IMR-90 (cell line): ENCODE measurements at regions of chr12 and their contacts with region 1.

Region 1: GRCh38 chr12:12872139-12872881 is 19.1 kb upstream of the GPRC5A start:
- DNase-seq: peak; percentile 88
- ATAC-seq: peak; percentile 45
- H3K4me3 ChIP-seq: peak overlapping the region; percentile 2; the same call in 1 of the 2 replicates
- H3K27ac ChIP-seq: peak overlapping the region; percentile 96
- H3K4me1 ChIP-seq: peaks cover 26% of the 10 kb centered on the region
- H3K27me3 ChIP-seq: no peaks in the 10 kb centered on the region
- CTCF ChIP-seq: no peak
- POLR2A ChIP-seq: peak; percentile 48; the same call in 1 of the 2 replicates
- RAD21 ChIP-seq: no peak

Region 2: DNA sequence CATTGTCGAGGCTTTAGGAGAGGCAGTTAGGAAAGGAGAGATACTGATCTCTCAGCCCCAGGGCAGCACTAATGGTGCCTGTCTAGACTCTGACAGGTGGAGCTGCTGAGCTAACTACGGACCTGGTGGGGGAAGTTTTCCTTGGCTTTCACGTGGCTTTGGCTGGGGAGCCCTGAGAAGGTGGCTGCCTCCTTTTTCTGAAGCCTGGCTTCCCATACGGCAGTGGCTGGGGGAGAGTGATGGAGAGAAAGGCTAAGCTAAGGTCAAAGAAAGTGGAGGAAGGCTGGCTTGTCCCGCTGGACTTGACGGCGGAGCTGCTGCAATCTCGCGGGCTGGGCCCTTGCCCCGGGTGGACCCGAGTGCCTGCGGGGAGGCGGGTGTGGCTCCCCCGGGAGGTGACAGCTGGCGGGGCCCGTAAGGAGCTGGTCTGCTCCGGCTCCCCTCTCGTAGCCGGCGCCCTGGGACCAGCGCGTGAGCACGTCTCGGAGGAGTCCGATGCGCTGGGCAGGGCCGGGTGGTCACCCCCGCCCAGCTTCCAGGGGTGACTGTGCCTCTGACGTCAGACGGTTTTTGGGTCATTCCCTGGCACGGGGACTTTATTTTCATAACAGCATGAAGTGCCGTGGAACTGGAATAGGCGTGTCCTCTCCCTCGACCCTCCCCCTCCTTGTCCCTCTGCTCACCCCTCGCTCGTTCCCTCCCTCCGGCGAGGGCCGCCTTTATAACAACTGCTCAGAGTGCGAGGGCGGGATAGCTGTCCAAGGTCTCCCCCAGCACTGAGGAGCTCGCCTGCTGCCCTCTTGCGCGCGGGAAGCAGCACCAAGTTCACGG is 18.7 kb after region 1 on chr12 and contains the start of gene GPRC5A:
- CTCF ChIA-PET with region 1: no interaction called
- POLR2A ChIA-PET with region 1: interaction called, 3 read pairs
- dilution Hi-C with region 1: no loop called
- in situ Hi-C with region 1: no loop called
- intact Hi-C with region 1: loop called (anchors 1 kb)
- DNase-seq: peak; percentile 98
- ATAC-seq: peak; percentile 90
- H3K4me3 ChIP-seq: peak within 1 kb of the TSS; percentile 72
- H3K27ac ChIP-seq: peak within 1 kb of the TSS; percentile 78
- H3K4me1 ChIP-seq: peaks cover 9% of the 10 kb centered on the region
- H3K27me3 ChIP-seq: no peaks in the 10 kb centered on the region
- CTCF ChIP-seq: peak; percentile 47
- POLR2A ChIP-seq: peak; percentile 98
- RAD21 ChIP-seq: peak; percentile 58
- total RNA-seq, gene GPRC5A: 49.6 and 49.7 TPM in 2 replicates

Region 3: DNA sequence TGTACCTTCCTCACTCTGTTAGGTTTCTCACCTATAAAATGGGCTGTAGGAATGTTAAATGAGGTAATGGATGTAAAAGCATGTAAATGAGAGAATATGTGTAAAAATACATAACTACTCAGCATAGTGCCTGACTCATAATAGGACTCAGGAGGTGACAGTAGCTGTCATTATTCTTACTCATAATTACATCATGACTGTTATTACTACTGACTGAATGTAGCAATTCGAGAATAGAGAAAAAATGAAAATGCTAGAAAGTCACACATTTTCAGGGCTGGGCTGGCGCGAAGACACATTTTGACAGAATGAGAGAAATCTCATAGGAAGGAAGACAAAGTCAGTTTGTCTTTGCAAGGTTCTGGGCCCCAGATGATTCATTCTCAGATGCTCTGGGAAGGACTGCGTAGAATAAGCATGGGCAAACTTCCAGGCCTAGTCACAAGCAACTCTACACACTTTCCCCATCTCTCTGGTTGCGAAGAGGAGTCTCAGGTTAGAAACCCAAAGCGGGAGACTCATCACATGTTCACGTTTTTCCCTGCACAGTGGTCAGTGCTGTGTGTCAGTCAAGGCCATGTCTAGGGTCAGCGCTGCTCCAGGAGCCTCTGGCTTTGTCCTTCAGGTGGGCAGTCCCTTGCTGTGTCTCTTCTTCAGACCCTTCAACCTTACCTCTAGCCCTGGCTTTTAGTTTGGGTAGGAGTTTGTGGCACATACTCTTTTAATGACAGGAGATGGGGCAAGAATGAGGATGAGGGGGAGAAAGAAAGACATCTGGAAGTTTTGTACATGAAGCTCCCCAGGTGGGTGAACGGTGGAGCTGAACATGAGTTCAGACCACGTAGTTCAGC is 27.4 kb after region 1 on chr12:
- CTCF ChIA-PET with region 1: no interaction called
- POLR2A ChIA-PET with region 1: no interaction called
- dilution Hi-C with region 1: no loop called
- in situ Hi-C with region 1: no loop called
- intact Hi-C with region 1: loop called (anchors 1 kb)
- DNase-seq: peak; percentile 98
- ATAC-seq: peak; percentile 60
- H3K4me3 ChIP-seq: no peak overlapping the region
- H3K27ac ChIP-seq: peak overlapping the region; percentile 95
- H3K4me1 ChIP-seq: peaks cover 30% of the 10 kb centered on the region
- H3K27me3 ChIP-seq: no peaks in the 10 kb centered on the region
- CTCF ChIP-seq: no peak
- POLR2A ChIP-seq: no peak; the same call in 1 of the 2 replicates
- RAD21 ChIP-seq: no peak

Region 4: DNA sequence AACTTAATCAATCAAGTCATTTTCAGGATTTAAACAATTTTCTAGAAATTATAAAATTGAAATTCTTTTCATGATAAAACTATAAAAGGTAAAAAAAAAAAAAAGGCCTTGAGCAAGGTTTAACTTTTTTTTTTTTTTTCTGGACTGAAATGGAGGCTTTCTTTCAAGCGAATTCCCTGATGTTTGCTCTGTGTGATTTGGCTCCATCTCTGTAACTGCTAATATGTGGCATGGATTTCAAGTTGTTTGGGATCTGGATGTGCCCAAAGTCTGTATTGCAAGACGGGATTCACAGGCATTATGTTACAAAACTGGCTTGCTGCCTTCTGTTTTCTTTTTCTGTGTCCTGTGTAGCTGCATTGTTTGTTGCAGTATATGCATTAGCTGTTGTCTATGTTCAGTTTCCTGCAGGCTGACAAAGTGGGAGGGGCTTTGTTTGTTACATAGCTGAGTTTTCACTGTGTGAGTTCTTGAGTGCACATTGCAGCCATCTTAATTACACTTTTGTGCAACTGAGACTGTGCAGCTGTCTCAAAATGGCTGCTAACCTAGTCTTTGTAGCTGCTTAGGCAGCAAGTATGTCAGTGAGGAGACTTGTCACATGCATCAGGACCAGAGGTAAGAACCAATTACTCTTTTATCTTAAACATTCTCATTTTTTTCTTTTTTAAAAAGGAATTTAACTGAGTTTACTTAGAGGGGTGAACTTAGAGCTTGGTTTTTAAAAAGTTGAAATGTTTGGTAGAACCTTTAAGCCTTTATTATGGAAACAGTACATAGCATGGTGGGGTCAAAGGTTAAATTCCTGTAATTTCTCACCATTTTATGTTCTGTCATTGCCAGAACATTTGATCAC is 1512.7 kb after region 1 on chr12:
- CTCF ChIA-PET with region 1: no interaction called
- POLR2A ChIA-PET with region 1: no interaction called
- dilution Hi-C with region 1: no loop called
- in situ Hi-C with region 1: loop called (anchors 25 kb)
- intact Hi-C with region 1: no loop called
- DNase-seq: peak; percentile 95
- ATAC-seq: peak; percentile 93
- H3K4me3 ChIP-seq: peak overlapping the region; percentile 36
- H3K27ac ChIP-seq: peak overlapping the region; percentile 39; the same call in 1 of the 2 replicates
- H3K4me1 ChIP-seq: no peaks in the 10 kb centered on the region
- H3K27me3 ChIP-seq: no peaks in the 10 kb centered on the region
- CTCF ChIP-seq: no peak
- POLR2A ChIP-seq: no peak
- RAD21 ChIP-seq: no peak